ENCODE measurements at regions of chr2 and their contacts with region 1.

Region 1: DNA sequence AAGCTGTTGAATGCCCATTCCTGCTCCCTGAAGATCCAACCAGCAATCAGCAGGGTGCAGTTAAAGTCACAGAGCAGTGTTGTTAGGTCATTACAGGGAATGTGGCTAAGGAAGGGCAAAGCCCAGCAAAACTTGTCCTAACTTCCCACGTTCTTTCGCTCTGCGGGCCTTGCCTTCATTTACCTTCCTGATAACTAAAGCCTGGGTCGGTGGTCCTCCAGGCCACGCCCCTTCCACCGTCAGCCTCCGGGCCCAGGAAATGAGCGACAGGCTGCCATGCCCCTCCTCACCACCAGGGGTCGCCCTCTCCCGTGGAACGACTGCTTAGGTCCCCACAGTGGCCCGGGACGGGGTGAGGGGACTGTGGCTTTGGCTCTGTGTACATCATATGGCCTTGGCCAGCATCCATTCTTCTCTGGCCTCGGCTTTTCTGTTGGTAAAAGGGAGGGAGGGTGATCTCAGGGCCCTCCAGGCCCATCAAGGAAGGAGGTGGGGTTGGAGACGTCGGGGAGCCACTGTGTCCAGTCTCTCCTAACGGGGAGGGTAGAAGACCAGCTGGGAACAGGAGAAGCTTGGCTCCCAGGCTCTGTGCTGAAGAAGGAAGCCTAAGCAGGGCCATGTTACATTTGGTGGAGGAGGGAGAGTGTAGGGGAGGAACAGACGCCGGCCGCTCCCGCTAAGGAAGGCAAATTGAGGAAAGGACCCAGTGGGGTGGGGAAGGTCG is 2.2 kb downstream of the SH2D6 start:
- DNase-seq: peak; percentile 92 to 97 (median 94)
- H3K4me3 ChIP-seq: no peak overlapping the region
- H3K27ac ChIP-seq: peak overlapping the region in 4 of 5 donors; percentile 40 to 95 (median 70)
- H3K4me1 ChIP-seq: peaks cover 9 to 27% of the 10 kb centered on the region in 2 donors
- H3K27me3 ChIP-seq: no peaks in the 10 kb centered on the region
- CTCF ChIP-seq: peak; percentile 100
- POLR2A ChIP-seq: peak in 1 of 2 donors; percentile 12

Region 2: GRCh38 chr2:85394261-85394681 is 26.4 kb before region 1 on chr2:
- intact Hi-C with region 1: loop called in 1 of 2 experiments (anchors 1 kb)
- DNase-seq: peak; percentile 48 to 78 (median 61)
- H3K4me3 ChIP-seq: no peak overlapping the region
- H3K27ac ChIP-seq: peak overlapping the region in 3 of 5 donors; percentile 13 to 61 (median 19)
- H3K4me1 ChIP-seq: peaks cover 3 to 9% of the 10 kb centered on the region in 2 donors
- H3K27me3 ChIP-seq: no peaks in the 10 kb centered on the region
- CTCF ChIP-seq: no peak
- POLR2A ChIP-seq: no peak

Region 3: DNA sequence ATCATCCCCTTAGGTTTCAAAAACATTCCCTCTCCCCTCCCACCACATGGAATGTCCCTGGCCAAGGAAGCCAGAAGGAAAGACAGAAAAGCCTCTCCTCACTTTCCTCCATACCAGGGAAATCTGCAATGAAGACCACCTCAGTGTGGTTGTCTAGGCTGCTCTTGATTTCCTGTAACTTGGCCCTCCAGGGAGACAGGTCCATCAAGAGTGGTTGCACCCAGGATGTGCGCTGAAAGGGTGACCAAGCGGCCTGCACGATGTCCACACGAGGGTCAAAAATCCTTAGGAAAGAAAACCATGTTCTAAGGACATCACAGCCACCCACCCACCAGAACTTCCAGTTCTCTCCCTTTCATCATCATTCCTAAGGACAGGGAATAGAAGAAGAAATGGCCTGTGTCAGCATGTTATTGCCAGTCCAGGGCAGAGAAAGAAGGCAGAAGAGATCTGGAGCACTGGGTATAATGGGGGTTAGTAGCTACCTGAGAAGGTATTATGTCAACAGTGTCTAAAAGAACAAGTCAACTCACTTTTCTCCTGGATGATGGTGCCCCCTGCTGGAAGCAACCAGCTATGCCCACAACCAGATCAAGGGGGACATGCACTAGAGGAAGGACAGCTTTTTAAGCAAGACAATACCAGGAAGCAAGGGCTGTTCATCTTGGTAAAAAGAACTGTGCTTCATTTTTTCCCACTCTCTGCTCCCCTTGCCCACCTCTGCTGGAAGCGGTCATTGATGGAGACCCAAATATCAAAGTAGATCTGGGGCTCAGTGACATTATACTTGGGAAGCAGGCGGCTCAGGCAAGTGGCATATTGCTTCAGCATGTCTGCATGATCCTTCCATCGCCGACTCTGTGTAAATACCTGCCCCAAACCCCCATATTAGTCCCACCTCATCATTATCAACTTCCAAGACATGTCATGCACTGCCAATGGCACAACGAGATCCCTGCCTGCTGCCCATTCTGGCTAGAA is 131.3 kb after region 1 on chr2:
- intact Hi-C with region 1: loop called (anchors 2 kb)
- DNase-seq: peak; percentile 78 to 94 (median 82)
- H3K4me3 ChIP-seq: no peak overlapping the region
- H3K27ac ChIP-seq: no peak overlapping the region
- H3K4me1 ChIP-seq: peaks cover 0 to 25% of the 10 kb centered on the region in 2 donors
- H3K27me3 ChIP-seq: no peaks in the 10 kb centered on the region
- CTCF ChIP-seq: peak; percentile 81 to 97 (median 94)
- POLR2A ChIP-seq: no peak

Region 4: GRCh38 chr2:85595301-85596025 is 174.8 kb after region 1 on chr2 and contains the start of gene RNF181:
- intact Hi-C with region 1: no loop called
- DNase-seq: peak; percentile 95 to 99 (median 98)
- H3K4me3 ChIP-seq: peak within 1 kb of the TSS; percentile 32 to 83 (median 76)
- H3K27ac ChIP-seq: peak within 1 kb of the TSS; percentile 79 to 94 (median 89)
- H3K4me1 ChIP-seq: peaks cover 15 to 34% of the 10 kb centered on the region in 2 donors
- H3K27me3 ChIP-seq: no peaks in the 10 kb centered on the region
- CTCF ChIP-seq: no peak
- POLR2A ChIP-seq: peak; percentile 47 to 90
- total RNA-seq, gene RNF181: 93.8 to 249 (median 175) TPM

Measured in adrenal gland (tissue), 19 donors.